K562 (cell line): ENCODE measurements at regions of chr3 and their contacts with region 1.

Region 1: GRCh38 chr3:132925256-132925930 is 112.8 kb upstream of the TMEM108 start:
- DNase-seq: no peak
- ATAC-seq: no peak
- H3K4me3 ChIP-seq: no peak overlapping the region
- H3K27ac ChIP-seq: peak overlapping the region; percentile 44; the same call in 1 of the 3 replicates
- H3K4me1 ChIP-seq: peaks cover 0 to 7% of the 10 kb centered on the region in 2 experiments; a peak in 3 of 5 replicates
- H3K27me3 ChIP-seq: no peaks in the 10 kb centered on the region
- CTCF ChIP-seq: no peak
- EP300 ChIP-seq: no peak
- POLR2A ChIP-seq: no peak
- RAD21 ChIP-seq: no peak

Region 2: DNA sequence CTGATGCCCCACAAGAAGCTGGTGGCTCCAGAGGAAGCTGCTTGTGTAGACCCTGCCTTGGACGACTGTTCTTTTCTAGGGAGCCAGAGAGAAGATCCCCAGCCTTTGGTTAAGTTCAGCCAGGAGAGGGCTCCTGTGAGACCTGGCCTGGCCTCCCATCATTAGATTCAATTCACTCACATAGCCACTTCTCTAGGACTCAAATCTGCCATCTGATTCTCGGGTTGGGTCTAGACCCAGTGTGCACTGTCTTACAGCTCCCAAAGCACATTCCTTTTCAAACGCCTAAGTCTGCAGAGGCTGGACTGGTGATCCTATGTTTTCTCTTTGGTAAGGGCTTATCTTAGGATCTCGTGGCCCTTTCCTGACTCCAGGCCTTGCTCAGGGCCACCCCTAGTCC is 121.5 kb before region 1 on chr3:
- CTCF ChIA-PET with region 1: no interaction called
- POLR2A ChIA-PET with region 1: no interaction called
- in situ Hi-C with region 1: no loop called
- intact Hi-C with region 1: loop called (anchors 10 kb)
- DNase-seq: peak in 2 of 4 experiments; percentile 12 to 19
- ATAC-seq: peak; percentile 74; the same call in 2 of the 3 replicates
- H3K4me3 ChIP-seq: no peak overlapping the region
- H3K27ac ChIP-seq: no peak overlapping the region
- H3K4me1 ChIP-seq: no peaks in the 10 kb centered on the region
- H3K27me3 ChIP-seq: no peaks in the 10 kb centered on the region
- CTCF ChIP-seq: peak; percentile 24 to 45 (median 31); a peak in 4 of 6 replicates
- EP300 ChIP-seq: no peak
- POLR2A ChIP-seq: no peak
- RAD21 ChIP-seq: peak; percentile 25 to 30; a peak in 2 of 4 replicates